ACHN (cell line): ENCODE measurements at regions of chr4 and their contacts with region 1.

Region 1: DNA sequence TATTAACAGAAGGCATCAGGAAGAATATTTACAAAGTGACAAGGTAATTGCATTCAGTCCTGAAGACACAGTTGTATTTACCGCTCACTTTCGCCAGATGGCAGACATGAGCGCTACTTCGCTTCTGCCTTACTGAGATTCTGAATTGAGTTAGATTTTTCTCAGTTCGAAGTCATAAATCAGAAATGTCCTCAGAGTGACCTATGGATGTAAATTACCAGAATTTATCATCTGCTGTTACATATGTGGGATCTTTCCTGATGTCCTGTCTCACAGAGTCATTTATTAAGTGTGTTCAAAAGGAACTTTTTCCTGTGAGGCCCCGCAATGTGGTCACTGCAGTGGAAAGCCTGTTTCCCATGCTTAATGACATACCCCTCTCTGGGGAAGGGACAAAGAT is 97.3 kb upstream of the DCLK2 start:
- DNase-seq: peak; percentile 56

Region 2: DNA sequence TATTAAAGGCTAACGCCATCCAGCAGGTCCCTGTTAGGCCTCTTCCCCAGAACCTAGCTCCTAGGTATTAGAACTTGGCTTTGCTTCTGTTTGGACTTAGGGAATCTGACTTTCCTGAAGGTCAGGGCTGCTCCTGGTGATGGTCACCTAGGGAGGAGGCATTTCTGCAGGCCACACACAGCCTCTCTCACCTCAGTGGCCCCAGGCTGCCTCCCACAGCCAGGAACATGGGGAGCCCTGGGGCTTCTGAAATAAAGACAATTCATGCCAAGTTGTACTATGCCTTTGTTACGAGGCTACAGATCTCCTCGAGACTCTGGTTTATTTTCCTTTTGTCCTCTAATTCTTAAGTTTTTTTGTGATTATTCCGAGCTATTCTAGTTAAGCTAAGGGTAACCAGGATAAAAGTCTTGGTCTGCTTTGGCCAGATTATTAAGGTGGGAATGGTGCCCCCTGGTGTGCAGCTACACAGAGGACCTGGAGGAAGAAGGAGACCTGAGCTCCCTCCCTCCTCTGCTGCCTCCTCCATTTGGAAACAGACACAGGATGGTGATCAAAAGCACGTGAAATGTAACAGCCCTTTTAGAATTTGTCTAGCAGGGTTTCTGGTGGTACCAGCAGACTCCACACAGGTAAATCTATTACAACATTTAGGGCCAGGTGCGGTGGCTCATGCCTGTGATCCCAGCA is 228.3 kb after region 1 on chr4:
- in situ Hi-C with region 1: loop called (anchors 25 kb)
- DNase-seq: peak; percentile 65